Endothelial cell of umbilical vein (primary cell): ENCODE measurements at regions of chr12 and their contacts with region 1.

Region 1: DNA sequence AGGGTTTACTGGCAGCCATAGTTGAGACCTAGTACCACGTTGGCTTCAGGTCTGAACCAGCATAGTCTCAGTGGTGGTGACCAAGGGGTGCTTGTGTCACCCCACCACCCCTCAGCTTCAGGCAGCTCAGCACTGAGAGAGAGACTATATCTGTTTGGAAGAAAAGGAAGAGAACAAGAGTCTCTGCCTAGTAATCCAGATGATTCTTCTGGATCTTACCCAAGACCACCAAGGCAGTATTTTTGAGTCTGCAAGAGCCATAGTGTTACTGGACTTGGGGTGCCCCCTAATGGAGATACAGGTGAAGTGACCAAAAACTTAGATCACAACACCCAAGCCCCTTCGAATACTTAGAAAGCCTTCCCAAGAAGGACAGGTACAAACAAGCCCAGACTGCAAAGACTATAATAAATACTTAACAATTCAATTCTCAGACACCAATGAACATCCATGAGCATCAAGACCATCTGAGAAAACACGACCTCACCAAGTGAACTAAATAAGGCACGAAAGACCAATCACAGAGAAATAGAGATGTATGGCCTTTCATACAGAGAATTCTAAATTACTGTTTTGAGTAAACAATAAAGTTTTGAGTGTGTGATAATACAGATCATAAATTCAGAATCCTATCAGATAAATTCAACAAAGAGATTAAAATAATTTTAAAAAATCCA is 107.0 kb downstream of the HELB start:
- DNase-seq: peak; percentile 69
- H3K4me3 ChIP-seq: no peak overlapping the region
- H3K27ac ChIP-seq: no peak overlapping the region
- H3K4me1 ChIP-seq: peaks cover 11% of the 10 kb centered on the region
- H3K27me3 ChIP-seq: no peaks in the 10 kb centered on the region
- CTCF ChIP-seq: peak; percentile 58 to 70
- POLR2A ChIP-seq: no peak

Region 2: DNA sequence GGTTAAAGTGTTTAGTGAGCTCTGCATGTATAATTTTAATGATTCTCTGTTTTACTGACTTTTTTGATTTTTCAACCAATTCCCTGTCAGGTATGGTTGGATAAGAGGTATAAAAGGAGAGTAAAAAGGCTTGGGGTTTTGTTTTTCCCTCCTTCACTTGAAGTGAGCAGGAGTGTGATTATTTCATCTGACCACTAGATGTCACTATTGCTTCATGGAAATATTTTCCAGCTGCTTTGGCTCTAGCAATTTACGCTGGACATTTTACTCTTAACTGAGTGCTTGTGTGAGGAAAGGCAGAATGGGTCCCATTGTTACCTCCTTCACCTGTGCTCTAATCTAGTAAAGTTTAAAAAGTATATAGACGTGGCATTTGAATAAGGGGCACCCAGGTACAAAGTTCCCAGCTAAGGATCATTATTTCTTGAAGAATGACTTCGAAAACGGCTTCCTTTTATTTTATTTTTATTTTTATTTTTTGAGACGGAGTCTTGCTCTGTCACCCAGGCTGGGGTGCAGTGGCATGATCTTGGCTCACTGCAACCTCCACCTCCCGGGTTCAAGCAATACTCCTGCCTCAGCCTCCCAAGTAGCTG is 1518.4 kb before region 1 on chr12:
- CTCF ChIA-PET with region 1: no interaction called
- POLR2A ChIA-PET with region 1: no interaction called
- dilution Hi-C with region 1: no loop called
- intact Hi-C with region 1: loop called (anchors 5 kb)
- DNase-seq: peak; percentile 67
- H3K4me3 ChIP-seq: no peak overlapping the region
- H3K27ac ChIP-seq: no peak overlapping the region
- H3K4me1 ChIP-seq: peaks cover 36% of the 10 kb centered on the region
- H3K27me3 ChIP-seq: no peaks in the 10 kb centered on the region
- CTCF ChIP-seq: peak; percentile 35 to 53
- POLR2A ChIP-seq: no peak

Region 3: DNA sequence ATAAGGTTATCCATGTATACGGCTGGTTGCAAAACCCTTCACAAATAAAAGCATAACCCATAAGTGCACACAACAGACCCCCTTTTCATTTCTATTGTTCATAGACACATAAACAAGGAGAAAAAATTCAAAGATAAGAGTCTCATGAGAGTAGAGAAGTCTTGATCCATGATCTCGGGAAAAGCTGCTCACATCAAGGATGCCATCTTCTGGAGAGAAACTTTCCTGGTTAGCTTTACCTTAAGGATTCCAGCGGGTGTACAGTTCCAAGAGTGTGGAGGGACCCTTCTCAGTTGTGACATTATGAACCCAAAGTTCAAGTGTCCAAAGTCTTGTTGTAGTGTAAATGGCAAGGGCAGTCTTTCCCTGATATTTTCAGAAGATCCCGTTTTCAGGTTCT is 423.3 kb before region 1 on chr12:
- CTCF ChIA-PET with region 1: no interaction called
- POLR2A ChIA-PET with region 1: no interaction called
- dilution Hi-C with region 1: no loop called
- intact Hi-C with region 1: loop called (anchors 10 kb)
- DNase-seq: peak; percentile 28
- H3K4me3 ChIP-seq: no peak overlapping the region
- H3K27ac ChIP-seq: no peak overlapping the region
- H3K4me1 ChIP-seq: no peaks in the 10 kb centered on the region
- H3K27me3 ChIP-seq: no peaks in the 10 kb centered on the region
- CTCF ChIP-seq: peak in 1 of 2 donors; percentile 12
- POLR2A ChIP-seq: no peak

Region 4: DNA sequence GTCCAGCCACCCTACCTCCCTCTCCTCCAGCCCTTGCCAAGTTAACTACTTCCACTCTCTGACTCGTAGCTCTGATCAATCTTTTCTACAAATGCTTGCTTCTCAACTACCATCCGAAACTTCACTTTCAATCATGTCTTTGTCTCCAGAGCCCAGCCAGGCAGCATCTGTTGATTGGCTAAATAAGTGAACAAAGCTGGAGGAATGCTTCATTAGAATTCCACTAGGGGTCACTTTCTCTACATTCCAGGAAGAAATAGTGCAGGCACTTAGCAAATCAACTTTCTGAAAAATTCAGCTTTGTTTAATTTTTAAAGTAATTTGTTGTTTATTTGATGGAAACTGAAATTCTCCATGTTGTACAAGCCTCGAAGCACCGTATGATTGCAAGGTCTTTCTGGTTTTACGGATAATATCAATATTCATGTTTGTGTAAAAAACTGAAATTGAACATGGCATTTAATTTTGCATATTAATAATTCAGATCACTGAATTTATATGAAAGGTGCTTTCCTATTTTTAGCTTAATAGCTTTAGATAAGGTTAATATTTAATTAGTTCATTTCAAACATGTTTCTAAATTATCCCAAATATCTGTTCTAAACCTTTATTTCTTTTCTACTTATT is 139.5 kb before region 1 on chr12:
- CTCF ChIA-PET with region 1: interaction called, 28 read pairs
- POLR2A ChIA-PET with region 1: no interaction called
- dilution Hi-C with region 1: no loop called
- intact Hi-C with region 1: loop called (anchors 1 kb)
- DNase-seq: peak; percentile 34
- H3K4me3 ChIP-seq: no peak overlapping the region
- H3K27ac ChIP-seq: no peak overlapping the region
- H3K4me1 ChIP-seq: no peaks in the 10 kb centered on the region
- H3K27me3 ChIP-seq: peaks cover 0 to 4% of the 10 kb centered on the region in 2 experiments
- CTCF ChIP-seq: peak; percentile 56 to 58
- POLR2A ChIP-seq: no peak

Region 5: DNA sequence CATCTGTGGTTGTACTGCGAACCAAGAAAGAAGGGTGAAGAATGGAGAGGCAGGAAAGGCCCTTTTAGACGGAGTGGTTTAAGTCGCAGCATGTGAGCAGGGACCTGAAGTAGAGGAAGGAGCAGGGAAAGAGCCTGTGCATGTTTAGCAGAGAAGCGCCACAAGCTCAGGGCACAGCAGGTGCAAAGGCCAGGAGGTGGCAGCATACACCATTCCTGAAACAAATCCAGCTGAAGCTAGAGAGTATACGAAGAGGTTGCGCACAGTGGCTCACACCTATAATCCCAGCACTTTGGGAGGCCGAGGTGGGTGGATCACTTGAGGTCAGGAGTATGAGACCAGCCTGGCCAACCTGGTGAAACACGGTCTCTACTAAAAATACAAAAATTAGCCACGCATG is 57.1 kb before region 1 on chr12:
- CTCF ChIA-PET with region 1: interaction called, 56 read pairs
- POLR2A ChIA-PET with region 1: no interaction called
- dilution Hi-C with region 1: no loop called
- intact Hi-C with region 1: loop called (anchors 1 kb)
- DNase-seq: peak; percentile 27
- H3K4me3 ChIP-seq: no peak overlapping the region
- H3K27ac ChIP-seq: no peak overlapping the region
- H3K4me1 ChIP-seq: no peaks in the 10 kb centered on the region
- H3K27me3 ChIP-seq: no peaks in the 10 kb centered on the region
- CTCF ChIP-seq: peak; percentile 19 to 35
- POLR2A ChIP-seq: no peak

Region 6: DNA sequence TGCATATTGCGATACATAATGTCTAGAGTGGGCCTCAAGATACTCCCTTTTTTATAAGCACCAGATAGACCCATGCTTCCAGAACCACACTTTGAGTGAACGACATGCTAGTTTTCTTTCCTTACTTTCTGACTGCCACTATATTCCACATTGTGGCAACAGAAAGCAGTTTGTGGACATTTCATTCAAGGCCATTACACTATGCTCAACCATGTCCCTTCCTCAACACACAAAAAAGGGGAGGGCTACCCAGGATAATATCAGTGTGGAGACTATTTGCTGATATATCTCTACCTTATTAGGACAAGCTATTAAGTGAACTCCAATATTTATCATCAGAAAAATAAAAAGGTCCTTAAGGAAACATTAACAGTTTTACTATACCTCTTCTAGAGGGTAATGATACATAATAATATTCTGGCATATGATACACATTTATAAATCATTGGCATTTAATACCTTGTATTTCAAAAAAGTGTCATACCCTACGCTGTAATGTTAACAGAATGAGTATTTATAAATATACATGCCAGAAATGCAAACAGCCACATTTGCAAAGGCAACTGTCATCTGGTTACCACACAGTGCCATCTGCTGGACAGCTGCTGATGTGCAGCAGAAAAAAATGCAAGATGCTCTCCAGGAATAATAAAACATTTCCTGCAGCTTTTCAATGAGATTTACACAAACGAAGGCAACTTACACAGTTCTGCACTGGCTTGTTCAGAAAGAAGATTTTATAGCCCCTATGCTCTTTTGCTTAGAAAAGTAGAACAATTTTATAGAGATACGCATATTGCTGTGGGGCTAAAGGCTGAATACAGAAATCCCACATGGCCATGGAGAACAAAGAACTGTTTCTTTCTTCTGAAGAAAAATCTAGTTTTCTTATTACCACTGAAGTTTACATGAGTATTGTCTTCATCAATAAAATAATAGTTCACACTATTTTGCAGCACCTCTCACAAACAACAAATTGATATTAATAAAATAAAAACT is 451.7 kb after region 1 on chr12:
- CTCF ChIA-PET with region 1: no interaction called
- POLR2A ChIA-PET with region 1: no interaction called
- dilution Hi-C with region 1: no loop called
- intact Hi-C with region 1: loop called (anchors 5 kb)
- DNase-seq: peak; percentile 79
- H3K4me3 ChIP-seq: no peak overlapping the region
- H3K27ac ChIP-seq: no peak overlapping the region
- H3K4me1 ChIP-seq: no peaks in the 10 kb centered on the region
- H3K27me3 ChIP-seq: no peaks in the 10 kb centered on the region
- CTCF ChIP-seq: peak; percentile 78 to 87
- POLR2A ChIP-seq: no peak